Activated CD4-positive, alpha-beta T cell treated with anti-CD3 and anti-CD28 coated beads, Interleukin-2, amount 10 ng/mL, durations not matched to agents 24 days and 14 days (primary cell): ENCODE measurements at regions of chr5 and their contacts with region 1.

Region 1: DNA sequence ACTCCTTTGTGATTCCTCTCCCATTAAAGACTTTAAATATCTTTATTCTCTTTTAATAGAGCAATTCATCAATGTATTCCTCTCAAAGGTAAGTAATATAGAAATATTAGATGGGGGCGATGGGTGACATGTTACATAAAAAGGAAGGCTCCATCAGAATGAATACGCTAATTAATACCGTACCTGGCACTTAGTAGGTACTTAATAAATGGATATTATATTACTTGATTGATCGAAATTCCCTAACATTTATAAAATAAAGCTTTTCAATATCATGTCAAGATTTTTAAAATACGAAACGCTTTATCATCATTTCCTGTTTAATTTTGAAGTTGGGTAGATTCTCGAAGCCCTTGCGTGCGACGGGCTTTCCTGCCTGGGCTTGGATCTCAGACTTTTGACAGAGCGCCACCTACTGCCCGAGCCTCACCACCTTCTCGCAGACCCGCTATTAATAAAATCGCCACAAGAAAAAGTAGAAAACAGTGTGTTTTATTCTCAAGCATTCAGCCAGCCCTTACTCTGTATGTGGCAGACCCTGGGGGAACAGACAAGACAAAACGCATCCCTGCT is 99.4 kb downstream of the C5orf15 start:
- DNase-seq: peak; percentile 91
- H3K4me3 Mint-ChIP-seq: no peak overlapping the region
- H3K27ac Mint-ChIP-seq: peak overlapping the region; percentile 17
- H3K4me1 Mint-ChIP-seq: peaks cover 29% of the 10 kb centered on the region
- H3K27me3 Mint-ChIP-seq: no peaks in the 10 kb centered on the region

Region 2: GRCh38 chr5:133423618-133424282 is 445.3 kb before region 1 on chr5:
- intact Hi-C with region 1: loop called (anchors 10 kb)
- DNase-seq: peak; percentile 91
- H3K4me3 Mint-ChIP-seq: no peak overlapping the region
- H3K27ac Mint-ChIP-seq: no peak overlapping the region
- H3K4me1 Mint-ChIP-seq: peaks cover 5% of the 10 kb centered on the region
- H3K27me3 Mint-ChIP-seq: peaks cover 15% of the 10 kb centered on the region

Region 3: GRCh38 chr5:133552931-133553525 is 316.0 kb before region 1 on chr5:
- intact Hi-C with region 1: loop called (anchors 1 kb)
- DNase-seq: peak; percentile 87
- H3K4me3 Mint-ChIP-seq: no peak overlapping the region
- H3K27ac Mint-ChIP-seq: no peak overlapping the region
- H3K4me1 Mint-ChIP-seq: peaks cover 3% of the 10 kb centered on the region
- H3K27me3 Mint-ChIP-seq: peaks cover 26% of the 10 kb centered on the region

Region 4: GRCh38 chr5:133754575-133755169 is 114.4 kb before region 1 on chr5:
- intact Hi-C with region 1: loop called (anchors 2 kb)
- DNase-seq: peak; percentile 70
- H3K4me3 Mint-ChIP-seq: no peak overlapping the region
- H3K27ac Mint-ChIP-seq: no peak overlapping the region
- H3K4me1 Mint-ChIP-seq: no peaks in the 10 kb centered on the region
- H3K27me3 Mint-ChIP-seq: peaks cover 25% of the 10 kb centered on the region

Region 5: GRCh38 chr5:133801955-133802751 is 66.9 kb before region 1 on chr5:
- intact Hi-C with region 1: no loop called
- DNase-seq: no peak
- H3K4me3 Mint-ChIP-seq: no peak overlapping the region
- H3K27ac Mint-ChIP-seq: no peak overlapping the region
- H3K4me1 Mint-ChIP-seq: no peaks in the 10 kb centered on the region
- H3K27me3 Mint-ChIP-seq: peaks cover 19% of the 10 kb centered on the region

Region 6: DNA sequence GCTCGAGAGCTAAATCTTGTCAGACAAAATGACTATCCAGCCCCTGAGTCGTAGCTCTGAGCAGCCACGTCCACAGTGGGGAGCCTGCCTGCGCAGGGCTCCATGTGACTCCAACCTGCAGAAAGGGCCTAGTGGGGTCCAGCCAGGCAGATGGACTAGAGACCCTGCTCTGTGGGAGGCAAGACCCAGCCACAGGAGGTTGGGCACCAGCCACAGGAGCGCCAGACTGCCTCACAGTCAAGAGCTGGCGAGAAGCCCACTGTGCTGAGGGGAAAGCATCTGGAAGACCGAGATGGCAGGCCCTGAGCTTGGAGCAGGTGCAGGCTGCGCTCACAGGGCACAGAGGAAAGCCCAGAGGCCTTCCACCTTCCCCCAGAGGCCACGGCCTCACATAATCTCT is 38.0 kb after region 1 on chr5:
- intact Hi-C with region 1: no loop called
- DNase-seq: no peak
- H3K4me3 Mint-ChIP-seq: no peak overlapping the region
- H3K27ac Mint-ChIP-seq: no peak overlapping the region
- H3K4me1 Mint-ChIP-seq: no peaks in the 10 kb centered on the region
- H3K27me3 Mint-ChIP-seq: no peaks in the 10 kb centered on the region

Region 7: GRCh38 chr5:133930061-133930812 is 61.2 kb after region 1 on chr5:
- intact Hi-C with region 1: loop called (anchors 1 kb)
- DNase-seq: peak; percentile 88
- H3K4me3 Mint-ChIP-seq: peak overlapping the region; percentile 74
- H3K27ac Mint-ChIP-seq: peak overlapping the region; percentile 98
- H3K4me1 Mint-ChIP-seq: peaks cover 56% of the 10 kb centered on the region
- H3K27me3 Mint-ChIP-seq: no peaks in the 10 kb centered on the region

Region 8: GRCh38 chr5:133938929-133939328 is 69.9 kb after region 1 on chr5:
- intact Hi-C with region 1: loop called (anchors 1 kb)
- DNase-seq: no peak
- H3K4me3 Mint-ChIP-seq: no peak overlapping the region
- H3K27ac Mint-ChIP-seq: peak overlapping the region; percentile 39
- H3K4me1 Mint-ChIP-seq: peaks cover 21% of the 10 kb centered on the region
- H3K27me3 Mint-ChIP-seq: no peaks in the 10 kb centered on the region